ENCODE measurements at regions of chr14 and their contacts with region 1.

Region 1: GRCh38 chr14:54572316-54572715 is 5.4 kb downstream of the SAMD4A start:
- DNase-seq: no peak
- H3K4me3 ChIP-seq: no peak overlapping the region
- H3K27ac ChIP-seq: no peak overlapping the region
- H3K4me1 ChIP-seq: peaks cover 2% of the 10 kb centered on the region
- H3K27me3 ChIP-seq: no peaks in the 10 kb centered on the region
- CTCF ChIP-seq: no peak
- EP300 ChIP-seq: no peak
- POLR2A ChIP-seq: no peak

Region 2: GRCh38 chr14:54512393-54512792 is 59.9 kb before region 1 on chr14:
- intact Hi-C with region 1: no loop called
- DNase-seq: no peak
- H3K4me3 ChIP-seq: no peak overlapping the region
- H3K27ac ChIP-seq: no peak overlapping the region
- H3K4me1 ChIP-seq: peaks cover 8% of the 10 kb centered on the region
- H3K27me3 ChIP-seq: no peaks in the 10 kb centered on the region
- CTCF ChIP-seq: no peak
- EP300 ChIP-seq: no peak
- POLR2A ChIP-seq: no peak

Region 3: GRCh38 chr14:54638135-54638446 is 65.8 kb after region 1 on chr14:
- intact Hi-C with region 1: loop called in 1 of 4 experiments (anchors 10 kb)
- DNase-seq: no peak
- H3K4me3 ChIP-seq: no peak overlapping the region
- H3K27ac ChIP-seq: no peak overlapping the region
- H3K4me1 ChIP-seq: no peaks in the 10 kb centered on the region
- H3K27me3 ChIP-seq: no peaks in the 10 kb centered on the region
- CTCF ChIP-seq: no peak
- EP300 ChIP-seq: no peak
- POLR2A ChIP-seq: no peak